AG04449 (cell line): ENCODE measurements at regions of chr1 and their contacts with region 1.

Region 1: GRCh38 chr1:66242646-66243547 is 291.1 kb upstream of the SGIP1 start:
- DNase-seq: no peak
- H3K4me3 ChIP-seq: no peak overlapping the region
- CTCF ChIP-seq: peak; percentile 100

Region 2: GRCh38 chr1:65948609-65949229 is 294.2 kb before region 1 on chr1:
- CTCF ChIA-PET with region 1: interaction called, 28 read pairs
- POLR2A ChIA-PET with region 1: no interaction called
- DNase-seq: no peak
- H3K4me3 ChIP-seq: no peak overlapping the region
- CTCF ChIP-seq: peak; percentile 22

Region 3: DNA sequence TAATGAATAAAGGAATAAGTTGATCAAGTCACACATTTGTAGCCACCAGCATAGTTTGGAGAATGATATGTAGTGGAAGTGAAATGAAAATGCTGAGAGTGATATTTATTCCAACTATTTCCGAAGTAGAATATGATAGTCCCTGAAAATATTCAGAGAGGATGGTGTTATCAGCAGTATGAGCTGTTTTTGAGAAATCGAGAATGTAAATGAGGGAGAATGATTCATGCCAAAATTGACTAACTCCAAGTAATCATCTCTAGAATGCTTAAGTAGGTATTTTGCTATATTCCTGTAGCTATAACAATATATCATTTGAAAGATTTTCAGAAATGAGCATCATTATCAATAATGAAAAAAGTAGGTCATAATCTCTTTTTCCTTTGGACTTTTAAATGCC is 271.4 kb before region 1 on chr1:
- CTCF ChIA-PET with region 1: interaction called, 401 read pairs
- POLR2A ChIA-PET with region 1: no interaction called
- DNase-seq: no peak
- H3K4me3 ChIP-seq: no peak overlapping the region
- CTCF ChIP-seq: no peak

Region 4: DNA sequence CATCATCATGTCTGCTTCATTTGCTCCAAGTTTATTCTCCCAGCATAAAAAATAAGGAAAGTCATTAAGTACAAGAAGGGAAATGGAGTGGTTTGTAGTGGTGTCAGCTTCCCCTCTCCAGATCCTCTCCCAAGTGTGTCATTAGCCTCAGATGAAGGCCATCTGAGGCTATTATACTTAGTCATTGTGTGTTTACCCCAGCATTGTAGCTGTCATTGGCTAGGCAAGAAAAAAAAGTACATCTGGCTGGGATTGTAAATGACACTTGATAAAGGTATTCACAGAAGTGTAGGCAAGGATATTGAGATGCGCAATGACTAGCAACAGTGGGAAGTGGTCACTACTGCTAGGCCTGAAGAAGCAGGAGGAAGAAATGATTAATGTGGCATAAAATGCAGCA is 25.9 kb before region 1 on chr1:
- CTCF ChIA-PET with region 1: interaction called, 11 read pairs
- POLR2A ChIA-PET with region 1: no interaction called
- DNase-seq: peak; percentile 50
- H3K4me3 ChIP-seq: no peak overlapping the region
- CTCF ChIP-seq: no peak

Region 5: DNA sequence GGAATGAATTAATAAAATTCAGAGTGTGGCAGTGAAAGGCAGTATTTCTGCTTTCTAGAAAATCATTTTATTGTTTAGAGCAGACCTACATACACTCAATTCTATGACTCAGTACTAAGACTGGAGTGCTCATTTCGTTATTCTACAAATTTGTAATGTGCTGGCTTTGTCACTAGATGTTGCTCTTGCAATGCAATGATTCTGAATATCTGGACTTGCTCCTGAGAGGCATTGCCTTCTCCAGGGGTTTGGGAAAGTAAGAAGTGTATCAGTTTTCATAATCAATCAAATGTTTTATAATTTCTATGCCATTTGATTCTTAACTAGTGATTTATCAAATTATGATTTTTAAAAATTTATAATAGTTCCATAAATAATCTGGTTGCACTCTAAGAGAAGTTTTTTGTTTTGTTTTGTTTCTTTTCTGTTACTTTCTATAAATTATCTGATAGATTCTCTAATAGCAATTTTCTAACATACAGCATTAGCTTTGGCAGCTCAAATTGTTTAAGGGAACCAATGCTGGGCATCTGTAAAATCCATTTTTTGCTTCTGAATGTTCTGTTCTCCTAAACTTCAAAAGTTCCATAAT is 10.5 kb after region 1 on chr1:
- CTCF ChIA-PET with region 1: interaction called, 45 read pairs
- POLR2A ChIA-PET with region 1: no interaction called
- DNase-seq: no peak
- H3K4me3 ChIP-seq: no peak overlapping the region
- CTCF ChIP-seq: peak; percentile 54

Region 6: GRCh38 chr1:66350001-66350547 is 107.2 kb after region 1 on chr1:
- CTCF ChIA-PET with region 1: no interaction called
- POLR2A ChIA-PET with region 1: no interaction called
- DNase-seq: no peak
- H3K4me3 ChIP-seq: no peak overlapping the region; the same call in 1 of the 2 replicates
- CTCF ChIP-seq: no peak

Region 7: DNA sequence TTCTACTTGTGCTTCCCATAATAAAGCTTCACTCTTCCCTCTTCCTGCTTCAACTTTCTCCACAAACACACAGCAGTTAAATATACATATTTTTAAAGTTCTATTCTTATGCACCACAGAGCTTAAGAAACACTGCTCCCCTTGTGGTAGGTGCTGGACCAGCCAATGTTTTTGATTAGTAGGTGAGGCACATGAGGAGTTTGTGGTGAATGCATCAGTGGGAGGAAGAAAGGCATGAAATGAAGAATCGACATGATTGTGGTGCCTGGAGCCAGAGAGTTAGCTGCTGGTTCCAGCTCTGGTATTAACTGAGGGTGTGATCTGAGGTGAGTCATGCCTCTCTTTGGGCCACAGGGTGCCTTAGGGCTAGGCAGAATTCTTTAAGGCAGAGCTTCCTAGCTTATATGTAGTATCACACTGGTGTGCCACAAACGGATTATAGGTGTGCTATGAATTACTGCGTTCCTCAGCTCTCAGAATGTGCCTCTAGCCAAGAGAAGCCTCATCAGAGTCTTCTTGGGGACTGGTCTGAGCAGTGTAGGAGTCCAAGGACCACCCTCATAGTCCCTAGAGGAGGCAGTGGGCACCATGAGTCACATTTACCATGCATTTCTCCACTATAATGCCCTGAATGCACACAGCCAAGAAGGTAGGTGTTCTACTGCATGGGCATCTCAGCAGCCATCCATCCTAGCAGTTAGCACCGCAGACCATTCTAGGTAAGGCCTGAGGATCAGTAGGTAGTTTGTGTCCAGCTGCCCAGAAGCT is 193.7 kb after region 1 on chr1:
- CTCF ChIA-PET with region 1: interaction called, 807 read pairs
- POLR2A ChIA-PET with region 1: no interaction called
- DNase-seq: peak; percentile 65
- H3K4me3 ChIP-seq: no peak overlapping the region
- CTCF ChIP-seq: peak; percentile 57

Region 8: GRCh38 chr1:66503841-66504470 is 261.1 kb after region 1 on chr1:
- CTCF ChIA-PET with region 1: interaction called, 124 read pairs
- POLR2A ChIA-PET with region 1: no interaction called
- DNase-seq: no peak
- H3K4me3 ChIP-seq: no peak overlapping the region
- CTCF ChIP-seq: peak; percentile 65